Left ventricle myocardium inferior (tissue), 1 donor: ENCODE measurements at regions of chr10 and their contacts with region 1.

Region 1: GRCh38 chr10:88254091-88254490 is 329.0 kb downstream of the RNLS start:
- DNase-seq: no peak
- H3K4me3 ChIP-seq: no peak overlapping the region
- H3K27ac ChIP-seq: peak overlapping the region; percentile 88
- H3K4me1 ChIP-seq: peaks cover 26% of the 10 kb centered on the region
- H3K27me3 ChIP-seq: no peaks in the 10 kb centered on the region
- CTCF ChIP-seq: no peak

Region 2: DNA sequence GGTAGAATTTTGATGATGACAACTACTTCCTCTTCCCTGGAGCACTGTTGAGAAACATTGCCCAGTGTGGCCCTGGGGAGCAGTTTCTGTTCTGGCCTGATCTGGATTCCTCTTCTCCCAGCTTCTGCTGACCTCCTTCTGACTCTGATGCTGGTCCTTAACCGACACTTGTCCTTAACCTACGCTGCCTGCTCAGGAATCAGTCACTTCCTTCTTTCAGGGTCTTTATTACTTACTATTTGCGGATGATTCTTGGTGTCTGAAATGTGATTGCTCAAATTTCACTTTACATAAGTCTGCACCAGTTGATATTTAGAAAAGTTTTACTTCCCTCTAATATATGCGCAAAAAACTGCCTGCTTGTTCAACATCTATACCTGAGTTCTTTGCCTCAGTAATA is 226.5 kb before region 1 on chr10:
- intact Hi-C with region 1: no loop called
- DNase-seq: no peak
- H3K4me3 ChIP-seq: no peak overlapping the region
- H3K27ac ChIP-seq: no peak overlapping the region
- H3K4me1 ChIP-seq: no peaks in the 10 kb centered on the region
- H3K27me3 ChIP-seq: no peaks in the 10 kb centered on the region
- CTCF ChIP-seq: no peak

Region 3: GRCh38 chr10:88386821-88387773 is 133.0 kb after region 1 on chr10:
- intact Hi-C with region 1: loop called (anchors 10 kb)
- DNase-seq: no peak
- H3K4me3 ChIP-seq: peak overlapping the region; percentile 46
- H3K27ac ChIP-seq: peak overlapping the region; percentile 74
- H3K4me1 ChIP-seq: peaks cover 43% of the 10 kb centered on the region
- H3K27me3 ChIP-seq: no peaks in the 10 kb centered on the region
- CTCF ChIP-seq: no peak